AG04449 (cell line): ENCODE measurements at regions of chr1 and their contacts with region 1.

Region 1: GRCh38 chr1:67561704-67562113 is 123.3 kb upstream of the GADD45A start:
- DNase-seq: no peak
- H3K4me3 ChIP-seq: no peak overlapping the region
- CTCF ChIP-seq: peak; percentile 93

Region 2: GRCh38 chr1:67540733-67541125 is 21.0 kb before region 1 on chr1:
- CTCF ChIA-PET with region 1: interaction called, 46 read pairs
- POLR2A ChIA-PET with region 1: no interaction called
- DNase-seq: no peak
- H3K4me3 ChIP-seq: no peak overlapping the region
- CTCF ChIP-seq: no peak

Region 3: DNA sequence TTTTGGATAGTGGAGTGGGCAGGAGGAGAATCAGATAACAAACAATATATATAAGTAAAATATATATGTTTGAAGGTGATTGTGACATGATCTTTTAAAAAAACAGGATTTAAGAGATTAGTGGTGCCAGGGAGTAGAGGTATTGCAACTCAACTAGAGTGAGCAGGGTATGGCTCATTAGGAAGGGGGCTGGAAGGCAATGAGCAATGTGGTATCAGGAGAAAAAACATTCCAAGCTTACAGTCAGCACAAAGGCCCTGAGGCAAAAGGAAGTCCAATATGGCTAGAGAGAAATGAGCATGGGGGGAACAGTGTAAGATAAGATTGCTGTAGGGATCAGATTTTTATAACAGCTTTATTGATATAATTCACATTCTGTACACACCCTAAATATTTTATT is 118.0 kb after region 1 on chr1:
- CTCF ChIA-PET with region 1: interaction called, 67 read pairs
- POLR2A ChIA-PET with region 1: interaction called, 24 read pairs
- DNase-seq: no peak
- H3K4me3 ChIP-seq: no peak overlapping the region
- CTCF ChIP-seq: no peak

Region 4: DNA sequence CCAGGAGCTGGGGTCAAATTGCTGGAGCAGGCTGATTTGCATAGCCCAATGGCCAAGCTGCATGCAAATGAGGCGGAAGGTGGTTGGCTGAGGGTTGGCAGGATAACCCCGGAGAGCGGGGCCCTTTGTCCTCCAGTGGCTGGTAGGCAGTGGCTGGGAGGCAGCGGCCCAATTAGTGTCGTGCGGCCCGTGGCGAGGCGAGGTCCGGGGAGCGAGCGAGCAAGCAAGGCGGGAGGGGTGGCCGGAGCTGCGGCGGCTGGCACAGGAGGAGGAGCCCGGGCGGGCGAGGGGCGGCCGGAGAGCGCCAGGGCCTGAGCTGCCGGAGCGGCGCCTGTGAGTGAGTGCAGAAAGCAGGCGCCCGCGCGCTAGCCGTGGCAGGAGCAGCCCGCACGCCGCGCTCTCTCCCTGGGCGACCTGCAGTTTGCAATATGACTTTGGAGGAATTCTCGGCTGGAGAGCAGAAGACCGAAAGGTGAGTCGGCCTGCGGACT is 123.4 kb after region 1 on chr1 and contains the start of gene GADD45A:
- CTCF ChIA-PET with region 1: interaction called, 67 read pairs
- POLR2A ChIA-PET with region 1: interaction called, 24 read pairs
- DNase-seq: peak; percentile 98
- H3K4me3 ChIP-seq: peak within 1 kb of the TSS; percentile 91
- CTCF ChIP-seq: no peak

Region 5: GRCh38 chr1:67705735-67706453 is 144.2 kb after region 1 on chr1:
- CTCF ChIA-PET with region 1: interaction called, 11 read pairs
- POLR2A ChIA-PET with region 1: no interaction called
- DNase-seq: no peak
- H3K4me3 ChIP-seq: no peak overlapping the region
- CTCF ChIP-seq: no peak

Region 6: DNA sequence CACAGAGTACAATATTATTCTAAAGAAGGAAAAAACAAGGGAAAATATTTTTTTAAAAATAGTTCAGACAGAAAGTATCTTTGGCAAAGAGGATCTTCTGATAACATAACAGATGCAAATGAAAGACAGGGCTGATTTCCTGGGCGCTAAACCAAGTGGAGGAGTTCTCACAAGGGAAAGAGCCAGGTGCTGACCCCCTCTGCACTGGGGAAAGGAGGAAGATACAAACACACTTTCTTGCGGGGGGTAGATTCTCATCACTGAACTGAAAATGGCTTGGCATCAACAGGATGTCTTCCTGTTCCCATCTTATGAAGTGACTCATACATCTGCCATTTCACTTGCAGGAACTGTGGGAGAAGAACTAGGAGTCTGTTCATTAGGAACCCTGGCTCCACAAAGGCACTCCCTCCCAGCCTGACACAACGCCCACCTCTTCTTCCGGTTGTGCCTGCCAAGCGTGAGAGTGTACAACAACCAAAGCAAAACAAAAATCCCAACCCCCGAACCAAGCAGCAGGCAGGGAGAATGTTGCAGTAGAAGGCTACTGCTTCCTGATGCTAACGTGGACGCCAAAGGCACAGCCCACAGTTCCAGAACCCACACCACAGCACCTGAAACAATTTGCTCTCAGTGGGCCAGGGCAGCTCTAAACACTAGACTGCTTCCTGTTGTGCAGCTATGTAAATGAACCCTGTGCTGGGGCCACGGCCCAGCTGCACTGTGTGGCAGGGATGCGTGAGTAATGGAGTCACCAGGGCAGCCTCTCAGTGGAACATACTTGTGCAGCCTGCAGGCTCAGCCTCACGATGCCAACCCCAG is 174.3 kb after region 1 on chr1:
- CTCF ChIA-PET with region 1: interaction called, 11 read pairs
- POLR2A ChIA-PET with region 1: no interaction called
- DNase-seq: peak; percentile 82
- H3K4me3 ChIP-seq: no peak overlapping the region; the same call in 1 of the 2 replicates
- CTCF ChIP-seq: no peak

Region 7: DNA sequence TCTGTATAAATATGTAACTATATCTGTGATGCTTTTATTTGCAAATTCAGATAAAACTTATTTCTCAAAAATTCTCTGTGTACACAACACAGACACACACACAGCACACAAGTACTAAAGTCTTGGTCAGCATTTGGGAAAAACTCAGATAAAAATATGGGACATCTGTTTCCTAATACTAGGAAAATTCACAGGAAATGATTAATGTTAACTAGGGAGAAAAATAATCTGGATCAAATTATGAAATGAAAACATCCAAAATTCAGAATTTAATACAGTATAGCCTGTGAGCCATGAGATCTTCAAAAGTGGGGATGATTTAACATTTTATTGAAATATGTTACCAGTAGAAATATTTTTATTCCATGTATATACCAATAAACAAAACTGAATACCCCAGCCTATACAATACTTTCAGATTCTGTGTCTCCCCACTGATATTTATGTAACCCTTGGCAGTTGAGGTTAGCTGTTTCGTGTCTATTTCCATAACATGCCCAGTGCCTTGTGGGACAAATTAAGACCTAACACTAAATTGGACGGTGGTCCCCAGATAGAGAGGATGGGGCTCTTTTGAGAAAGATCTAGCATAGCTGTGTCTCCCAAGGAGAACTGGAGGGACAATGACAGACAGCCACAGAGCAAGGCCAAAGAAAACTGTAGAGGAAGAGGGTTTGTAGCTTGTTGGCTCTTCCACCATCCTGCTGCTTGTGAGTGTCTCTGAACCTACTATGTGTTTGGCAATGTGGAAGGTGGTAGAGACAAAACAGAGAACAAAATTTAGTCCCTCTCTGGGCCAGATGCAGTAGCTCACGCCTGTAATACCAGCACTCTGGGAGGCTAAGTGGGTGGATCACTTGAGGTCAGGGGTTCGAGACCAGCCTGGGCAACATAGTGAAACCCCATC is 224.4 kb after region 1 on chr1:
- CTCF ChIA-PET with region 1: interaction called, 11 read pairs
- POLR2A ChIA-PET with region 1: no interaction called
- DNase-seq: no peak
- H3K4me3 ChIP-seq: no peak overlapping the region
- CTCF ChIP-seq: no peak